Prostate gland (tissue), 2 donors: ENCODE measurements at regions of chr11 and their contacts with region 1.

Region 1: DNA sequence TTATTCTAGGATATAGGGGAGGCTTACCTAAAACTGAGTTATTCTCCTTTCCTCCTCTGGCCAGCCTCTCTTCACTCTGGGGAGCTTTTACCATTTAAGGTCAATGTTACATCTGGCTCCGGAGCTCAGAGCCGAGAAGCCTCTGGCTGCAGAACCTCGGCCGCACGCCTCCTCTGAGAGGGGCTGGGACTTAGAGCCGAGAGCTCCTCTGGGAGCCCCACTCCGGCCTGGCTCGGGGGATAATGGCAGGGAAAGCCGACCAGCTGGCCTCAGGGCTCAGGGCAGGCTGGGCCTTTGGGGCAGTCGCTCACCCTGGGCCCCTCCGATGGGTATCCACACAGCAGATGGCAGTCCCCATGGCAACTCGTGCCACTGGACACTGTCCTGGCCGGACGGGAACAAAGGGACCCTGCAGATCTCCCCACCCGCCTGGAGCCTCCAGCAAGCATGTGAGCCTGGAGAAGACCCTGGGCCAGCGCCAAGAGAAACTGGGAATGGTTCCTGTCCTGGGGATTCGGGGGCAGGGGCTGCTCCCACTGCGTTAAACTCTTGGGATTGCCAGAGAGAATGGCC is at the start of gene IRAG1:
- DNase-seq: no peak
- H3K4me3 ChIP-seq: peak within 1 kb of the TSS; percentile 29 to 32
- H3K27ac ChIP-seq: peak within 1 kb of the TSS; percentile 74 to 80
- H3K4me1 ChIP-seq: no peaks in the 10 kb centered on the region
- H3K27me3 ChIP-seq: no peaks in the 10 kb centered on the region
- CTCF ChIP-seq: no peak
- POLR2A ChIP-seq: no peak
- total RNA-seq, gene IRAG1: 14.7 to 43.6 TPM

Region 2: GRCh38 chr11:10657308-10658271 is 36.0 kb before region 1 on chr11:
- intact Hi-C with region 1: loop called (anchors 5 kb)
- DNase-seq: no peak
- H3K4me3 ChIP-seq: no peak overlapping the region
- H3K27ac ChIP-seq: peak overlapping the region; percentile 14 to 57
- H3K4me1 ChIP-seq: peaks cover 12% of the 10 kb centered on the region
- H3K27me3 ChIP-seq: no peaks in the 10 kb centered on the region
- CTCF ChIP-seq: no peak
- POLR2A ChIP-seq: no peak

Region 3: DNA sequence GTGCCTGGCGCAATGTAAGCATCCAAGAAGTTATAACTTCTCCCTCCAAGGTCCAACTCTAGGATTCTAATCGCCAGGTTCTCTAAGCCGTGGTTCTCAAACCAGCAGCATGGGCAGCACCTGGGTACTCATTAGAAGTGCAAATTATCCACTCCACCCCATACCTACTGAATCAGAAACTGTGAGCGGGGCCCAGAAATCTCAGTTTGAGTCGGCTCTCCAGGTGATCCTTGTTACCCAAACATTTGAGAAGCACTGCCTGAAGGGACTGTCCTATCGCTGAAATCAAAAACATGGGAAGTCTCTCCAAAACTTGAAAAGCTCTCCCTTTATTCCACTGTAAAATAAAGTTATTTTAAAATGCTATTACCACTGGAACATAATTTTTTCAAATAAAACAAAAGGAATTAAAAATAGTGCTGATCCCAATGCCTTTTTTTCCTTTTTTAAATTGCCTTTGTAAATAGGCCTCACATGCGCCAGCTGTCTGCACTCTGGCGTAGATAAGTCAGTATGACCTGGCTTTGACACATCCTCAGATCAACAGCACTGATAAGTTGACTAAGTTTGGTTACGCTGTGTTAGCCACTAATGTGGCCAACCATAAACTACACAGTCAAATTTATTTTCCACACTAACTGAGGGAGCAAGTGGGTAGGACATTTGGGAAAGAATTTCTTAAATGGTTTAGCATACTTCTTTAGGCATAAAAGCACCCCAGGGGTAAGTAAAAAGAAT is 49.0 kb after region 1 on chr11:
- intact Hi-C with region 1: no loop called
- DNase-seq: no peak
- H3K4me3 ChIP-seq: no peak overlapping the region
- H3K27ac ChIP-seq: peak overlapping the region in 1 of 2 donors; percentile 50
- H3K4me1 ChIP-seq: no peaks in the 10 kb centered on the region
- H3K27me3 ChIP-seq: no peaks in the 10 kb centered on the region
- CTCF ChIP-seq: no peak
- POLR2A ChIP-seq: no peak